Activated CD4-positive, alpha-beta T cell treated with anti-CD3 and anti-CD28 coated beads for 36 hours (primary cell): ENCODE measurements at regions of chr18 and their contacts with region 1.

Region 1: GRCh38 chr18:79988451-79989194 is at the start of gene TXNL4A:
- DNase-seq: peak; percentile 92
- ATAC-seq: peak; percentile 98
- H3K4me3 Mint-ChIP-seq: peak within 1 kb of the TSS; percentile 92
- H3K27ac Mint-ChIP-seq: peak within 1 kb of the TSS; percentile 98
- H3K4me1 Mint-ChIP-seq: peaks cover 31% of the 10 kb centered on the region
- H3K27me3 Mint-ChIP-seq: no peaks in the 10 kb centered on the region
- total RNA-seq, gene TXNL4A: 150 to 194 TPM

Region 2: DNA sequence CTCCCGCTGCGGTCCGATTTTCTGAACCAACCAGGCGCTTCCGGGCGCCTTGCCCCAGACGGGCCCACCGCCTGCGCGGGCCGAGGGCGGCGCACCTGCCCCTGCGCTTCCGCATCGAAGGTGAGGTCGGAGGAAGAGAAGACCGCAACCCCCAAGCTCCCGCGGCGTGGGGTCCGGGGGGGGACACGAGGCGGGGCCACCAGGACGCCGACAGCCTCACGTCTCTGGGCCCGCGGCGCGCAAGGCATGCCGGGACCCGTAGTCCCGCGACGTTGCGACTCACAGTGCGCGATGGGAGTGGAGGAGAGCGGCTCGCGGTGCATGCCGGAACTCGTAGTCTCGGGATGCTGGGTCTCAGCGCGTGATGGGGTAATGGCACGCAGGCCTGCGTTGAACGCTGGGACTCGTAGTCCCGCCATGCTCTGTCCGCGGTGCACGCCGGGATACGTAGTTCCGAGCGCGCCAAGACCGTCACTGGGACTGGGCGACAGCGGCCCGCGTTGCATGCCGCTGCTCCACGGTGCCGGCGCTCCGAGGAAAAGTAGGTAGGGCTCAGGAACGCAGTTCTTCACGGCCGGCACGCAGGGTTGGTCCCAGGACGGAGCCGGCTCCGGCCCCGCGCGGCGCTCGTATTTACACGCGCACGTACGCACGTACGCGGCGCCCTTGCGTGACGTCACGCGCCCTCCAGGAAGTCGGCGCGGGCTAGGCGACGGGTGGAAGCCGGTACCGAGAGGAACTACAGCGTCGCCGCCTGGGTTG is 309.3 kb before region 1 on chr18 and contains the start of gene CTDP1:
- CTCF ChIA-PET with region 1: interaction called, 3 read pairs
- POLR2A ChIA-PET with region 1: no interaction called
- intact Hi-C with region 1: loop called in 1 of 2 experiments (anchors 1 kb)
- DNase-seq: peak; percentile 99
- ATAC-seq: peak; percentile 91
- H3K4me3 Mint-ChIP-seq: peak within 1 kb of the TSS; percentile 90
- H3K27ac Mint-ChIP-seq: peak within 1 kb of the TSS; percentile 97
- H3K4me1 Mint-ChIP-seq: peaks cover 65% of the 10 kb centered on the region
- H3K27me3 Mint-ChIP-seq: no peaks in the 10 kb centered on the region
- total RNA-seq, gene CTDP1: 36.7 to 45.5 TPM

Region 3: DNA sequence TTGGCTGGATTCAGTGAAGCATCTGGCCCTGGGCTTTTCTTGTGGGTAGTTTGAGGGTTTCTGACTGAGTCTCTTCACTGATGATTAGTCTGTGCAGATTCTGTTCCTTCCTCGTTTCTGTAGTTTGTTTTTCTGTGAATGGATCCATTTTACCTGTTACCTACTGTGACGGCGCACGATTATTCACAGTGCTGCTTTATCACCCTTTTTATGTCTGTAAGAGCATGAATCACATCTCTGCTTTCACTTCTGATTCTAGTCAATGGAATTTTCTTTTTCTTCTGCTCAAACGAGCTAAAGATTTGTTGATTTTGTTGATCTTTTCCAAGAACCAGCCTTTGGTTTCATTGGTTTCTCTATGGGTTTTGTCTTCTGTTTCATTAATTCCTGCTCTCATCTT is 97.9 kb before region 1 on chr18:
- CTCF ChIA-PET with region 1: interaction called, 4 read pairs
- POLR2A ChIA-PET with region 1: no interaction called
- intact Hi-C with region 1: loop called in 1 of 2 experiments (anchors 1 kb)
- DNase-seq: peak; percentile 67
- ATAC-seq: peak; percentile 98
- H3K4me3 Mint-ChIP-seq: no peak overlapping the region
- H3K27ac Mint-ChIP-seq: peak overlapping the region; percentile 83
- H3K4me1 Mint-ChIP-seq: peaks cover 12% of the 10 kb centered on the region
- H3K27me3 Mint-ChIP-seq: no peaks in the 10 kb centered on the region

Region 4: GRCh38 chr18:79951578-79952455 is 36.8 kb before region 1 on chr18 and contains the start of gene SLC66A2:
- CTCF ChIA-PET with region 1: no interaction called
- POLR2A ChIA-PET with region 1: no interaction called
- intact Hi-C with region 1: loop called (anchors 1 to 2 kb)
- DNase-seq: peak; percentile 97
- ATAC-seq: peak; percentile 87
- H3K4me3 Mint-ChIP-seq: peak within 1 kb of the TSS; percentile 82
- H3K27ac Mint-ChIP-seq: peak within 1 kb of the TSS; percentile 81
- H3K4me1 Mint-ChIP-seq: peaks cover 39% of the 10 kb centered on the region
- H3K27me3 Mint-ChIP-seq: no peaks in the 10 kb centered on the region
- total RNA-seq, gene SLC66A2: 23.4 to 28.5 TPM

Region 5: DNA sequence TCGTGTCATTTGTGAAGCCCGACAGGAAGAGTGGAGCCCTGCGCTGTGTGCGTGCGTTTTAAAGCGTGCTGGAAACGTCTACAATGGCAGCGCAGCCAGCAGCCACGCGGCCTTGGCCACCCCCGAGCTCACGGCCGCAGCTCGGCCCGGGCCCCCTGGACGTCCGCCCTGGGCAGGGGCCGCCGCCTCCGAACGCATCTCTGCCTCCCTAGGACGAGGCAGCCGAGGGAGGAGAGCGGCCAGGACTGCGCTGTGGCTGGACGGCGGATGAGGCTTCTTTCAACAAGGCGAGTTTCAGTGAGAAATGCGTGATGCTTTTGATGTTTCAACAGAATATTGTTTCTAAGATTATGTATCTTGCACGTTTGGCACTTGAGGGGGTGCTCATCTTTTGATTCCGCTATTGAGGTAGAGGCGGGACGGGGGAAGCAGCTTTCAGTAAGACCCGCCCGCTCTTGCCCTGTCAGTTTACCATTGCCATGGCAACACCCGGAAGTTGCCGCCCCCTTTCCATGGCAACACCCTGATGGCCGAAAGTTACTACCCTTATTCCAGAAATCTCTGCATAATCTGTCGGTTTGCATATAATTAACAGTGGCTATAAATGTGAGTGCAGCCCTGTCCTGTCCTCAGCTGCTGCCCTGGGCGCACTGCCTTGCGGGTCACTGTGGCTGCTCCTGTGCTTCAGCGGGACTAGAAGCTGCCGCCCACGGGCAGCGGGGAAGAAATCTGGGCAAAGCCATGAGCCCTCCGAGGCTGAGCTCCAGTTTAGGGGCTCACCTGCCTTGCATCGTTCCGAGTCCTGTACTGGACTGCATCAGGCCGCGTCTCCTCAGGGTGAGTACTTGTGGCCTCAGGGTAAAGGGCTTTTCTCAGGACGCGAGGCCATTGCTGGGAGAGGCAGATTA is 159.0 kb after region 1 on chr18:
- CTCF ChIA-PET with region 1: no interaction called
- POLR2A ChIA-PET with region 1: no interaction called
- intact Hi-C with region 1: loop called in 1 of 2 experiments (anchors 5 kb)
- DNase-seq: peak; percentile 86
- ATAC-seq: peak; percentile 87
- H3K4me3 Mint-ChIP-seq: peak overlapping the region; percentile 74
- H3K27ac Mint-ChIP-seq: no peak overlapping the region
- H3K4me1 Mint-ChIP-seq: peaks cover 15% of the 10 kb centered on the region
- H3K27me3 Mint-ChIP-seq: peaks cover 9% of the 10 kb centered on the region